Dendritic cell treated with granulocyte-macrophage colony-stimulating factor and Interleukin-4, amounts not matched to agents 40 ng/mL and 50 ng/mL, for 4 days (primary cell): ENCODE measurements at regions of chr15 and their contacts with region 1.

Region 1: GRCh38 chr15:88657326-88658069 is 18.7 kb downstream of the ISG20 start:
- H3K4me3 Mint-ChIP-seq: no peak overlapping the region
- H3K27ac Mint-ChIP-seq: no peak overlapping the region
- H3K4me1 Mint-ChIP-seq: no peaks in the 10 kb centered on the region
- H3K27me3 Mint-ChIP-seq: no peaks in the 10 kb centered on the region

Region 2: DNA sequence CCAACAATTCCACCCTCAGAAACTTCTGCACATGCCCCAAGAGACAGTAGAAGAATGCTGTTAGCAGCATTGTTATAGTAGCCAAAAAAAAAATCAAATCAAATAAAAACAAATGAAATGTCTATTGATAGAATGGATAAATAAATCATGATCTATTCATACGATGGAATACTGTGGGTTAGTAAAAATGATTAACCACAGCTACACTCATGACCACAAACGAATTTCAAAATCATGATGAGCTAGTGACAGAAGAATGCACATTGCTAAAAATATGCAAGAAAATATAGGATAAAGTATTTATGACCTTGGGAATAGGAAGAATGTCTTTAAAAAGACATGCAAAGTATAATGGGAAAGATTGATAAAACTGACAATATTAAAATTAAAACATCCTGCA is 88.2 kb after region 1 on chr15:
- intact Hi-C with region 1: no loop called
- H3K4me3 Mint-ChIP-seq: no peak overlapping the region
- H3K27ac Mint-ChIP-seq: no peak overlapping the region
- H3K4me1 Mint-ChIP-seq: no peaks in the 10 kb centered on the region
- H3K27me3 Mint-ChIP-seq: peaks cover 13% of the 10 kb centered on the region

Region 3: GRCh38 chr15:88834211-88834812 is 176.8 kb after region 1 on chr15:
- intact Hi-C with region 1: loop called (anchors 10 kb)
- H3K4me3 Mint-ChIP-seq: no peak overlapping the region
- H3K27ac Mint-ChIP-seq: no peak overlapping the region
- H3K4me1 Mint-ChIP-seq: no peaks in the 10 kb centered on the region
- H3K27me3 Mint-ChIP-seq: no peaks in the 10 kb centered on the region

Region 4: GRCh38 chr15:88918738-88919137 is 261.2 kb after region 1 on chr15:
- intact Hi-C with region 1: no loop called
- H3K4me3 Mint-ChIP-seq: no peak overlapping the region
- H3K27ac Mint-ChIP-seq: peak overlapping the region; percentile 16
- H3K4me1 Mint-ChIP-seq: peaks cover 22% of the 10 kb centered on the region
- H3K27me3 Mint-ChIP-seq: peaks cover 4% of the 10 kb centered on the region